ENCODE measurements at regions of chr16 and their contacts with region 1.

Region 1: DNA sequence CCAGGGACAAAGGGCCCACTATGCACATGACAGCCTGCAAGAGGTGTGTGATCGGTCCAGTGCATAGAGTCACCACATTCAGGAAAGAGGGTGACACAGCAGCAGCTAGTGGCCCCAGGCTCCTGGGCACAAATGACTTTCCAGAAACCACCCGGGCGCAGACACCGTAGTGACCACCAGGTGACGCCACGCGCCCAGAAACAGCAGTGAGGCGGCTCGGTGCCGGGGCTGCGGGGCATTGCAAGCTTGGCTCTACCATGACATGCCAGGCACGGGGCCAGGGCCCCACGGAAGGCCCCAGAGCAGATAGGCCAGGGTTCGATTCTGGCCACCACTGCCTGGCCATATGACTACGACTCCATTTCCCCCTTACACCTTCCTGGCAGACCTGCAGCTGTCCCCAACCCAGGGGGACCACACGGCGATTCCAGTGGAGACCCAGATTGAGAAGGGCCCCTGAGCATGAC is 6.7 kb downstream of the RHBDF1 start:
- DNase-seq: peak; percentile 72
- H3K4me3 ChIP-seq: no peak overlapping the region
- H3K27ac ChIP-seq: no peak overlapping the region
- H3K4me1 ChIP-seq: no peaks in the 10 kb centered on the region
- H3K27me3 ChIP-seq: no peaks in the 10 kb centered on the region
- CTCF ChIP-seq: peak; percentile 98
- POLR2A ChIP-seq: peak; percentile 27

Region 2: GRCh38 chr16:9903-10665 is 55.6 kb before region 1 on chr16:
- CTCF ChIA-PET with region 1: no interaction called
- POLR2A ChIA-PET with region 1: no interaction called
- dilution Hi-C with region 1: no loop called
- intact Hi-C with region 1: no loop called
- DNase-seq: no peak
- H3K4me3 ChIP-seq: peak overlapping the region in 1 of 3 experiments; percentile 27
- H3K27ac ChIP-seq: no peak overlapping the region
- H3K4me1 ChIP-seq: no peaks in the 10 kb centered on the region
- H3K27me3 ChIP-seq: no peaks in the 10 kb centered on the region
- CTCF ChIP-seq: no peak
- POLR2A ChIP-seq: no peak

Region 3: DNA sequence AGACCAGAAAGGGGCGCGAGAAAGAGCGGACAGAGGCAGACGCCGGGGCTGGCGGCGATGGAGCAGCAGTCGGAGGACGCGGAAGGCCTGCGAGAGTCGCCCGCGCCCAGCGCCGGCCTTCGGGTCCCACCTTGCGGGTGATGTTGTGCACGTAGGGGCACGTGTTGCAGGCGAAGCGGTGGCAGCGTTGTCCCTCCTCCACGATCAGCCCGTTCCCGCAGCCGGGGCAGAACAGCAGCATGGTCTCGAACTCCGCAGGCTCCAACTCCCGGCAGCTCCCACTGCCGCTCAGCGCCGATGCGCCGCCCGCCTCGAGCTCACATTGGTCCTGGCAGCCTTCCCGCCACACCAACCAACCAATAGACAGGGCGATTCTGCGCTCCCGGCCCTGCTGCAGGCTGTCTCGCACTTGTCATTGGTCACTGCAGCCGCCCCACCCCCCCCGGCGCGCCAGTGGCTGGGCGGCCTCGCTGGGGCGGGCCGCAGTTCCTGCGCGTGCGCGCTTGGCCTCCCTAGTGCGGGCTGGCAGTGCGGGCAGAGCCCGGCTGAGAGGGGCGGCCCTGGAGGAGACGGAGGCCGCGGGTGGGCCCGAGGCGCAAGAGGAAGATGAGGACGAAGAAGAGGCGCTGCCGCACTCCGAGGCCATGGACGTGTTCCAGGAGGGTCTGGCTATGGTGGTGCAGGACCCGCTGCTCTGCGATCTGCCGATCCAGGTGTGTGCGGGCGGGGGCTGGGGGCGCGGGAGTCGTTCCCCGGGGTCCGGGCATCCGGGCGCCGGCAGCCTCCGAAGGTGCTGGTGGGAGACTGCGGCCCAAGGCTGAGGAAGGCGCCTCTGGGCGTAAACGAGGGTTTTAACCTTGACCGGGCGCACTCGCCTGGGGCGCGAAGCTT is 12.1 kb before region 1 on chr16 and contains the starts of genes POLR3K and SNRNP25:
- CTCF ChIA-PET with region 1: interaction called, 20 read pairs
- POLR2A ChIA-PET with region 1: no interaction called
- dilution Hi-C with region 1: no loop called
- intact Hi-C with region 1: no loop called
- DNase-seq: peak; percentile 98
- H3K4me3 ChIP-seq: peak within 1 kb of the TSS; percentile 20 to 59 (median 49)
- H3K27ac ChIP-seq: no peak within 1 kb of the TSS
- H3K4me1 ChIP-seq: peaks cover 5% of the 10 kb centered on the region
- H3K27me3 ChIP-seq: no peaks in the 10 kb centered on the region
- CTCF ChIP-seq: no peak
- POLR2A ChIP-seq: peak; percentile 86
- total RNA-seq, gene POLR3K: 18.4 and 20.6 TPM in 2 replicates
- total RNA-seq, gene SNRNP25: 41.8 and 50.2 TPM in 2 replicates

Region 4: DNA sequence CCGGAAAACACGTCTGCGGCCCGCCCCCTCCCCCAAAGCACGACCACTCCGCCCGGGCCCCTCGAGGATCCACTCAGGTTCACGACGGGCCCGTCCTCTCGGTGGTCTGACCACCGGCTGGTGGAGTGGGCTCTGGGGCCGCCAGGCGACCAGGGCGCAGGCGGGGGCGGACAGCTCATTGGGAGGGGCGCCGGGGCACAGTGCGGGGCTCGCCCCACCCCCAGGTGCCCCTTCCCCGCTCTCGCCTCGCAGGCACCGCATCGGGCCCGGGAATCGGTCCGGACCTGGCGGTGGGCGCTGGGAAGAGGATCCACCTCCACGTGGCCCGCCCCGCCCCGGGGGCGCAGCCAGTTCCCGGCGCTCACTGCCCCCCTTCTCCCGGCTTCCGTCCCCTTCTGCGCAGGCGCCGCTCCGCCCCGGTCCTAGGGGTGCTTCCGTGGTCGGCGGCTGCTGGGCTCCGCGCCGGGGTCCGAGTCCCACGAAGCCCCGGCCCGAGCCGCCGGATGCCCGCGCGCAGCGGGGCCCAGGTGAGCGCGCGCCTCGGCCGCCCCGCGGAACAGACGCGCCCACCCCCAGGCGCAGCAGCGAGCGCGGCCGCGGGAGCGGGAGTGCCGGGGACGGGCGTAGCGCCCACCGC is 12.2 kb after region 1 on chr16 and contains the start of gene MPG:
- CTCF ChIA-PET with region 1: interaction called, 790 read pairs
- POLR2A ChIA-PET with region 1: no interaction called
- dilution Hi-C with region 1: no loop called
- intact Hi-C with region 1: no loop called
- DNase-seq: peak; percentile 69
- H3K4me3 ChIP-seq: peak within 1 kb of the TSS; percentile 13 to 73 (median 47)
- H3K27ac ChIP-seq: peak within 1 kb of the TSS; percentile 92
- H3K4me1 ChIP-seq: peaks cover 32% of the 10 kb centered on the region
- H3K27me3 ChIP-seq: no peaks in the 10 kb centered on the region
- CTCF ChIP-seq: no peak
- POLR2A ChIP-seq: peak; percentile 57
- total RNA-seq, gene MPG: 68.1 and 70.5 TPM in 2 replicates

Region 5: DNA sequence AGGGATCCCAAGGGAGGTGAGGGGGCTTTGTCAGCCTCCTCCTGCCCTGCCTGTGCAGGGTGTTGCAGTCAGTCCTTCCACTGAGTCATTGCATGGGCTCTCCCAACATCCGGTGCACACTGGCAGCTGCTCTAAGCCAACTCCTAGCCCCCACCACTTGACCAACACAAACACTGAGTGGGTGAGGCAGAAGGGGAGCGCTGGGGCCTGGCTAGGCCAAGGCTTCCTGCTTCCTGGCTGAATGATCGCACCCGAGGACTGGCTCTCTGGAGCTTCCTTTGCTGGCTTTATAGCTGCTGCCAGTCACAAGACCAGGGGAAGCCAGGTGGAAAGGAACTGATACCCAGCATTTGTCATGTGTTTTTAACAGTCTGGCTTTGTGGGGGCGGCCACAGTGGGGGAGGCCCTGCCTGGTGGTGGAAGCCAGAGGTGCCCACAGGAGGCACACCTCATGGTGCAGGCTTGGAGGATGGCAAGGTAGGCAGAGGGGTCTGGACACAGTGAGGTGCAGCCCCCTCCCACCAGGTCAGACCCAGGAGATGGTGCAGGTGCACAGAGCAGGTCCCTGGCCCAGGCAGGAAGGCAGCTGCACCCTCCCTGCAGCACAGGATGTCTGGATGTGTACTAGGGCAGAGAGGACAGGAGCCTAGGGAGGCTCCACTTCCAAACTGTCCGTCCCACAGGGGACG is 19.2 kb after region 1 on chr16:
- CTCF ChIA-PET with region 1: interaction called, 790 read pairs
- POLR2A ChIA-PET with region 1: no interaction called
- dilution Hi-C with region 1: no loop called
- intact Hi-C with region 1: loop called (anchors 1 kb)
- DNase-seq: peak; percentile 97
- H3K4me3 ChIP-seq: no peak overlapping the region
- H3K27ac ChIP-seq: peak overlapping the region; percentile 78
- H3K4me1 ChIP-seq: peaks cover 33% of the 10 kb centered on the region
- H3K27me3 ChIP-seq: no peaks in the 10 kb centered on the region
- CTCF ChIP-seq: no peak
- POLR2A ChIP-seq: peak; percentile 66

Region 6: GRCh38 chr16:96935-97381 is 31.3 kb after region 1 on chr16:
- CTCF ChIA-PET with region 1: interaction called, 790 read pairs
- POLR2A ChIA-PET with region 1: no interaction called
- dilution Hi-C with region 1: no loop called
- intact Hi-C with region 1: loop called (anchors 1 kb)
- DNase-seq: peak; percentile 87
- H3K4me3 ChIP-seq: no peak overlapping the region
- H3K27ac ChIP-seq: no peak overlapping the region
- H3K4me1 ChIP-seq: no peaks in the 10 kb centered on the region
- H3K27me3 ChIP-seq: no peaks in the 10 kb centered on the region
- CTCF ChIP-seq: peak; percentile 99 to 100
- POLR2A ChIP-seq: peak; percentile 43

Region 7: DNA sequence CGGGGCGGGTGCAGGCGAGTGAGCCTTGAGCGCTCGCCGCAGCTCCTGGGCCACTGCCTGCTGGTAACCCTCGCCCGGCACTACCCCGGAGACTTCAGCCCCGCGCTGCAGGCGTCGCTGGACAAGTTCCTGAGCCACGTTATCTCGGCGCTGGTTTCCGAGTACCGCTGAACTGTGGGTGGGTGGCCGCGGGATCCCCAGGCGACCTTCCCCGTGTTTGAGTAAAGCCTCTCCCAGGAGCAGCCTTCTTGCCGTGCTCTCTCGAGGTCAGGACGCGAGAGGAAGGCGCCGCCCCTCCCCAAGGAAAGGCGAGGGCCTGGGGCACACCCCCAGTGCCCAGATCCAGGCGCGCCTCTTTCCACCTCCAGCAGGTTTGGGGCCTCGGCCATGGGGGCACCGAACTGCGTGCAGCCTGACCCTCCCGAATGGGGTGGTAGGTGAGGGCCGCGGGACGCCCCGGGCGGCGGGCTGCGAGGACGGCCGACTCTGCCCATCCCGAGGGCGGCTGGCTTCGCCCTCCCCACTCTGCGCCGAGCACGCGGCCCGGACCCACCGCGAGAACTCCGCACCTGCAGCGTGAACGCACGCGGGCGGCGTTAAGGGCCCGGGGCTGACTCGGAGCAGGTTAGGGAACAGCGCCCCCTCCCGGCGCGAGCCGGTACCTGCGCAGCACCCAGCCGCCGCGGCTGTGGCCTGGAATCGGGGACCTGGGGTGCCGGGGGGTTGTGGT is 115.4 kb after region 1 on chr16:
- CTCF ChIA-PET with region 1: interaction called, 20 read pairs
- POLR2A ChIA-PET with region 1: no interaction called
- dilution Hi-C with region 1: no loop called
- intact Hi-C with region 1: loop called (anchors 1 kb)
- DNase-seq: peak; percentile 71
- H3K4me3 ChIP-seq: no peak overlapping the region
- H3K27ac ChIP-seq: no peak overlapping the region
- H3K4me1 ChIP-seq: peaks cover 5% of the 10 kb centered on the region
- H3K27me3 ChIP-seq: peaks cover 19 to 25% of the 10 kb centered on the region in 2 experiments
- CTCF ChIP-seq: peak; percentile 95 to 98
- POLR2A ChIP-seq: peak; percentile 48

Region 8: DNA sequence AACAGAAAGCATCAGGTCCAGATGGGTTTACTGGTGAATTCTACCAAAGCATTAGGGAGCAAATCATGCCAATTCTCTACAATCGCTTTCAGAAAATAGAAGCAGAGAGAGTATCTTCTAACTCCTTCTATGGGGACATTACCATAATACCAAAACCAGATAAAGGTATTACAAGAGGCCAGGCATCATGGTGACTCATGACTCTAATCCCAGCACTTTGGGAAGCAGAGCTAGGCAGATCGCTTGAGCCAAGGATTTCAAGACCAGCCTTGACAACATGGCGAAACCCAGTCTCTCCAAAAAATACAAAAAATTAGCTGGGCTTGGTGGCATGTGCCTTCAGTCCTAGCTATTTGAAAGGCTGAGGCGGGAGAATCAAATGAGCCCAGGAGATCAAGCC is 137.5 kb after region 1 on chr16:
- CTCF ChIA-PET with region 1: no interaction called
- POLR2A ChIA-PET with region 1: no interaction called
- dilution Hi-C with region 1: no loop called
- intact Hi-C with region 1: no loop called
- DNase-seq: no peak
- H3K4me3 ChIP-seq: no peak overlapping the region
- H3K27ac ChIP-seq: no peak overlapping the region
- H3K4me1 ChIP-seq: no peaks in the 10 kb centered on the region
- H3K27me3 ChIP-seq: no peaks in the 10 kb centered on the region
- CTCF ChIP-seq: no peak
- POLR2A ChIP-seq: no peak

Region 9: GRCh38 chr16:361872-362701 is 296.4 kb after region 1 on chr16:
- CTCF ChIA-PET with region 1: interaction called, 21 read pairs
- POLR2A ChIA-PET with region 1: no interaction called
- dilution Hi-C with region 1: no loop called
- intact Hi-C with region 1: no loop called
- DNase-seq: peak; percentile 70
- H3K4me3 ChIP-seq: no peak overlapping the region
- H3K27ac ChIP-seq: no peak overlapping the region
- H3K4me1 ChIP-seq: no peaks in the 10 kb centered on the region
- H3K27me3 ChIP-seq: no peaks in the 10 kb centered on the region
- CTCF ChIP-seq: peak; percentile 65 to 83
- POLR2A ChIP-seq: no peak